AG04450 (cell line): ENCODE measurements at regions of chr21 and their contacts with region 1.

Region 1: DNA sequence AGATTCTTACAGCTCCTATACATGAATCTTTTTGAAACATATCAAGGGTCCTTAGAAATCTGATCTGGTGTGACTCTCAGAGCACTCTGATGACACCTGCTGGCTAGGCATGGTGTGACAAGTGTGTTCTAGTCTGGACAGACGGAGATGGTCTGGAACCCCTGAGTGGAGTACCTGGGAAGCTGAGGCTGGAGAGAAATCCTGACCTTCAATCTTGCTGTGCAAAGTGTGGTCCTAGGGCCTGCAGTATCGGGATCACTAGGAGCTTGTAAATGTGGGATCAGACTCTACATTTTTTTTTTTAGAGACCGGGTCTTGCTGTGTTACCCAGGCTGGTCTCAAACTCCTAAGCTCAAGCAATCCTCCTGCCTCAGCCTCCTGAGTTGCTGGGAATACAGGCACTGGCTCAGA is 78.6 kb upstream of the SOD1 start:
- DNase-seq: peak; percentile 24
- H3K4me3 ChIP-seq: no peak overlapping the region
- H3K27ac ChIP-seq: no peak overlapping the region
- H3K27me3 ChIP-seq: peaks cover 2% of the 10 kb centered on the region
- CTCF ChIP-seq: peak; percentile 90

Region 2: DNA sequence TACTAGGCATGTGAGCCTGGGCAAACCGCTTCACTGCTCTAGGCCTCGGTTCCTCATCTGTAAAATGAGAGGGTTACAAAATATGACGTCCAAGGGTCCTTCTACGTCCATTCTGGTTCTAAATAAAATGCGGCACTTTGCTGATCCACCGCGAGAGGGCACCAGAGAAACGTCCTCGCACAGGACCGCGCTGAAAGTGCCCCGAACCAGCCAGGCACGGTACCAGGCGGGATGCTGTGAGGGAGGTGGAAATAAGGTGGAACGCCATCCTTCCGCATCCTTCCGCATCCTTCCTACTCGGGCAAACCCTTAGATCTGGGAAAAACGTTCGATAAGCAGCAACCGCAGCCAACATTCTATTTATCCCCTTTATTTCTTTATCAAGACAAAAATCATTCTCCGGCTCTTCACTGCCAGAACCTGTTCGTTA is 482.3 kb before region 1 on chr21:
- CTCF ChIA-PET with region 1: interaction called, 24 read pairs
- POLR2A ChIA-PET with region 1: no interaction called
- DNase-seq: peak; percentile 10
- H3K4me3 ChIP-seq: no peak overlapping the region
- H3K27ac ChIP-seq: no peak overlapping the region
- H3K27me3 ChIP-seq: no peaks in the 10 kb centered on the region
- CTCF ChIP-seq: peak; percentile 91

Region 3: DNA sequence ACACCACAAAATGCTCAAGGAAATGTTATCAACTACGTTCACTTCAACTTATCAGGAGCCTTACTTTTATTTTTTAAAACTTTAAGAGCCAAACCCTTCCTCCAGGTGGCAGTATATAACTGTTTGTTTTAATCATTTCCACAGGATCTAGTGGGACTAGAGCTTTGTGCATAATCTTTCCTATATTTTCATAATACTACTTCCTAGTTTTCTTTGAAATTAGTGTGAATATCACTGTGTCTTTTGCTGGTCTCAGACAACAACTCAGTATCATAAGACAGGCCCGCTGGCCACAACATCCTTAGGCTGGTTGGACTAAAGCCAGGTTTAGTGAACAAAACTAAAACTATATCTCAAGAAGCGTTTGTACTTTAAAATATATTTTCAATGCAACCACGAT is 382.3 kb before region 1 on chr21:
- CTCF ChIA-PET with region 1: interaction called, 329 read pairs
- POLR2A ChIA-PET with region 1: no interaction called
- DNase-seq: peak; percentile 24
- H3K4me3 ChIP-seq: no peak overlapping the region
- H3K27ac ChIP-seq: no peak overlapping the region
- H3K27me3 ChIP-seq: no peaks in the 10 kb centered on the region
- CTCF ChIP-seq: peak; percentile 63

Region 4: GRCh38 chr21:31347435-31348032 is 233.3 kb before region 1 on chr21:
- CTCF ChIA-PET with region 1: interaction called, 25 read pairs
- POLR2A ChIA-PET with region 1: no interaction called
- DNase-seq: no peak
- H3K4me3 ChIP-seq: no peak overlapping the region
- H3K27ac ChIP-seq: no peak overlapping the region
- H3K27me3 ChIP-seq: peaks cover 17% of the 10 kb centered on the region
- CTCF ChIP-seq: peak; percentile 65

Region 5: GRCh38 chr21:31592963-31593560 is 12.2 kb after region 1 on chr21:
- CTCF ChIA-PET with region 1: interaction called, 16 read pairs
- POLR2A ChIA-PET with region 1: no interaction called
- DNase-seq: no peak
- H3K4me3 ChIP-seq: no peak overlapping the region
- H3K27ac ChIP-seq: no peak overlapping the region
- H3K27me3 ChIP-seq: no peaks in the 10 kb centered on the region
- CTCF ChIP-seq: no peak

Region 6: DNA sequence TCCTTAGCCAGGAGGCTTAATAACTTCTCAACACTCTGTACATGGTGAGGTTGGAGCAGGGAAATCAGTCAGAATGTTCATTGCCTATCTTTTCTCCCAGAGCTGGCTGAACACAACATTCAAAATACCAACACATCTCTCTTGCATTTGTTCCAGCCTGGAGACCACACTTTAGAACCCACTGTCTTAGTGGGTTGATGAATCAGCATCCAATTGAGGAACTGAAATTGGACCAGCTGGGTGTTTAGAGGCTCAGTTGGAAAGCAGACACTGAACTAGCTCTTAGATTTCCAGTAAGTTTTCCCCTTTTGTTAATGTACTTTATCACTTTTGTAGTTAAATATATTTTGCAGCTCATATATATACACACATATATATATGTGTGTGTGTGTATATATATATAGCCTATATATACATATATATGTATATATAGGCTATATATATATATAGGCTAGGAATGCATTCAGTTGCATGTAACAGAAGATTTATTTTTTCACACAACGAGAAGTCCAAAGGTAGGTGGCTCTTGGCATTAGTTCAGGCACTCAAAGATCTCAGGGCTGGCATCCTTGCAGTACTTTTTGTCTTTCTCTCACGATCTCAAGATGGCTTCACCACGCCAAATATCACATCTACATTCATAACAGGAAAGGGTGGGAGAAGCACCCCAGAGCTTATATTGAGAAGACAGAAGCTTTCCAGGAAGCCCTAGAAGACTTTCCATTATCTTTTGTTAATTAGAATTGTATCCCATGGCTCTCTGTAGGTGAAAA is 256.9 kb after region 1 on chr21:
- CTCF ChIA-PET with region 1: no interaction called
- POLR2A ChIA-PET with region 1: no interaction called
- DNase-seq: no peak
- H3K4me3 ChIP-seq: no peak overlapping the region
- H3K27ac ChIP-seq: no peak overlapping the region
- H3K27me3 ChIP-seq: no peaks in the 10 kb centered on the region
- CTCF ChIP-seq: no peak